Calu3 (cell line): ENCODE measurements at regions of chr7 and their contacts with region 1.

Region 1: DNA sequence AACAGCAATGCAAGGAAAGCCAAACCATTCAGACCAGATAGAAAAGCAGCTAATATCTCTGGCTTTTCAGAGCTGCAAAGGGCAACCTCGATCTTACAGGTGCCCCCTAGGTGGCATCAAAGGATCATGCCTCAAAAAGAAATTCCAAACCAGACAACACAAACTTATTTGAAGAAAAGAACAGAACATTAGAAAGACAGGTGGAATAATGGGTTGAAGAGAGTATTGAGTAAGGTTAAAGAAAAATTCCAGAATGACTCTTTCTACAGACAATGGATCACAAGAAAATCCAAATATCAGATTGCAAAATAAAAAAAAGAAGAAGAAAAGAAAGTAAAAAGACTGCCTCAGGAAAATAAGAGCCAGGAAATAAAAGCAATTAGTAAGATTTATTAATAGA is 213.7 kb downstream of the ELMO1 start:
- DNase-seq: peak; percentile 43
- H3K4me3 Mint-ChIP-seq: no peak overlapping the region
- H3K27ac Mint-ChIP-seq: no peak overlapping the region
- H3K4me1 Mint-ChIP-seq: no peaks in the 10 kb centered on the region
- H3K27me3 Mint-ChIP-seq: peaks cover 55% of the 10 kb centered on the region
- CTCF ChIP-seq: peak; percentile 57

Region 2: DNA sequence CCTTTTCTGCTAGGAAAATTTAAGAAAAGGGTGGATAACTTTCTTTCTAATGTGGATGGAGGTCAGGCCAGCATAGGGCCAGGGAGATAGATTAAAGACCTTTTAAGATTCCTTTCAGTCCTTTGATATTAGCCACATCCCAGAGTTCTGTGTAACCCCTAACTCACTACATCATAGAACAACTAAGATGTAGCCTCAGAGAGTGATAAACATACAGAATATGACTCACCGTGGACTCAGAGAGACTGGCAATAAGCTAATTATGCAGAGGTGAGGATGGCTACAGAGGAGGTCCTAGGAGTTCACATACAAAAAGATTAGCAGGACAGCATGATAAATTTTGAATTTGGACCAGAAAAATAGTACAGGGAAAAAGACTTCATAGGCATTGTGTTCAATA is 651.6 kb before region 1 on chr7:
- CTCF ChIA-PET with region 1: no interaction called
- intact Hi-C with region 1: no loop called
- DNase-seq: no peak
- H3K4me3 Mint-ChIP-seq: no peak overlapping the region
- H3K27ac Mint-ChIP-seq: no peak overlapping the region
- H3K4me1 Mint-ChIP-seq: no peaks in the 10 kb centered on the region
- H3K27me3 Mint-ChIP-seq: peaks cover 17% of the 10 kb centered on the region
- CTCF ChIP-seq: no peak

Region 3: GRCh38 chr7:37352974-37353948 is 118.3 kb after region 1 on chr7:
- CTCF ChIA-PET with region 1: interaction called, 6 read pairs
- intact Hi-C with region 1: loop called (anchors 1 kb)
- DNase-seq: peak; percentile 61
- H3K4me3 Mint-ChIP-seq: no peak overlapping the region
- H3K27ac Mint-ChIP-seq: no peak overlapping the region
- H3K4me1 Mint-ChIP-seq: no peaks in the 10 kb centered on the region
- H3K27me3 Mint-ChIP-seq: no peaks in the 10 kb centered on the region
- CTCF ChIP-seq: peak; percentile 53

Region 4: DNA sequence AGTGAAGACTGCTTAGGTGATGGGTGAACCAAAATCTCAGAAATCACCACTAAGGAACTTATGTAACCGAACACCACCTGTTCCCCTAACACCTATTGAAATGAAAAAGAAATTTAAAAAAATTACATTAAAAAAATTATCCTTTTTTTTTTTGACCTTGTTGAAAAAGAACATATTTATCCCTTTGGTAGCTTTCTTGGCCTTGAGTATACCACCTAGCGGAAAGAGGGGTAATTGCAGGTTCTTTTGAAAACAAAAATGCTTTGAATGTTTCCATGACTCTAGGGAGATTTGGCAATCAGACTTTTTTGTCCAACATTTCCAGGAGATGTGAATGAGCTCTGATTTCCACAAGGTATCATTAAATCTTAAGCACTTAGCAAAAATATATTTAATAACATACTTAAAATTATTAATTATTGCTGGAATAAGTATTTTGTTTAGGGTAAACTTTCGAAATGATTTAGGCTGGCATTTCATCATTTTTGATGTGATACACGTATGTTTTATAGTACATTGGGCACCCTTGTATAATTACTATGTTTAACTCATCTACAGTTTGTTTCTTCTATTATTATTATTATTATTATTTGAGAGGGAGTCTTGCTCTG is 260.8 kb after region 1 on chr7:
- CTCF ChIA-PET with region 1: interaction called, 3 read pairs
- intact Hi-C with region 1: loop called (anchors 1 kb)
- DNase-seq: no peak
- H3K4me3 Mint-ChIP-seq: no peak overlapping the region
- H3K27ac Mint-ChIP-seq: no peak overlapping the region
- H3K4me1 Mint-ChIP-seq: no peaks in the 10 kb centered on the region
- H3K27me3 Mint-ChIP-seq: no peaks in the 10 kb centered on the region
- CTCF ChIP-seq: peak; percentile 61

Region 5: GRCh38 chr7:37510043-37510634 is 275.2 kb after region 1 on chr7:
- CTCF ChIA-PET with region 1: interaction called, 4 read pairs
- intact Hi-C with region 1: loop called (anchors 1 kb)
- DNase-seq: peak; percentile 27
- H3K4me3 Mint-ChIP-seq: no peak overlapping the region
- H3K27ac Mint-ChIP-seq: no peak overlapping the region
- H3K4me1 Mint-ChIP-seq: no peaks in the 10 kb centered on the region
- H3K27me3 Mint-ChIP-seq: peaks cover 11% of the 10 kb centered on the region
- CTCF ChIP-seq: peak; percentile 61

Region 6: GRCh38 chr7:37833107-37833817 is 598.3 kb after region 1 on chr7:
- CTCF ChIA-PET with region 1: no interaction called
- intact Hi-C with region 1: loop called (anchors 1 kb)
- DNase-seq: peak; percentile 59
- H3K4me3 Mint-ChIP-seq: peak overlapping the region; percentile 72
- H3K27ac Mint-ChIP-seq: no peak overlapping the region
- H3K4me1 Mint-ChIP-seq: peaks cover 16% of the 10 kb centered on the region
- H3K27me3 Mint-ChIP-seq: peaks cover 25% of the 10 kb centered on the region
- CTCF ChIP-seq: peak; percentile 67